BJ (cell line): ENCODE measurements at regions of chr2 and their contacts with region 1.

Region 1: GRCh38 chr2:230160112-230160660 is 59.6 kb downstream of the SP110 start:
- DNase-seq: no peak
- H3K4me3 ChIP-seq: no peak overlapping the region
- H3K27me3 ChIP-seq: no peaks in the 10 kb centered on the region
- CTCF ChIP-seq: peak; percentile 80

Region 2: GRCh38 chr2:230007931-230008707 is 152.1 kb before region 1 on chr2:
- CTCF ChIA-PET with region 1: interaction called, 77 read pairs
- POLR2A ChIA-PET with region 1: no interaction called
- DNase-seq: peak; percentile 17
- H3K4me3 ChIP-seq: no peak overlapping the region
- H3K27me3 ChIP-seq: no peaks in the 10 kb centered on the region
- CTCF ChIP-seq: peak; percentile 80

Region 3: DNA sequence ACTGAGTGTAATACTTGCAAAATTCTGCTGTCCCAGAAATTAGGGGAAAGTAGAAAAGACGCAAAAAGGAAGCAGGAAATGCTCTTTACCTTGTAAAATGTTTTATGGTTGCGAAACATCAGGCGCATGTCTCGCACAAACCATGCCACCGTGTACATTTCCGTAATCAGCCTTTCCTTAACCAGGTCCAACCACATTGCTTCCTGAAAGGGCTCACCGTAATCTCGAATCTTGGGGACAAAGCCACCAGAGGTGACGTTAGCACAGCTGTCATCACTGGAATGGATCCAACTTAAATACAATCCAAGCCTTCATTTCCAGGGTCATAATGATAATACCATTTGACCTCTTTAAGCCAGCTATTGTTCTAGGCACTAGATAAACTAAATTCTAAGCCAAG is 10.3 kb after region 1 on chr2:
- CTCF ChIA-PET with region 1: interaction called, 11 read pairs
- POLR2A ChIA-PET with region 1: no interaction called
- DNase-seq: no peak
- H3K4me3 ChIP-seq: no peak overlapping the region; the same call in 1 of the 2 replicates
- H3K27me3 ChIP-seq: no peaks in the 10 kb centered on the region
- CTCF ChIP-seq: no peak